AG04450 (cell line): ENCODE measurements at regions of chr3 and their contacts with region 1.

Region 1: DNA sequence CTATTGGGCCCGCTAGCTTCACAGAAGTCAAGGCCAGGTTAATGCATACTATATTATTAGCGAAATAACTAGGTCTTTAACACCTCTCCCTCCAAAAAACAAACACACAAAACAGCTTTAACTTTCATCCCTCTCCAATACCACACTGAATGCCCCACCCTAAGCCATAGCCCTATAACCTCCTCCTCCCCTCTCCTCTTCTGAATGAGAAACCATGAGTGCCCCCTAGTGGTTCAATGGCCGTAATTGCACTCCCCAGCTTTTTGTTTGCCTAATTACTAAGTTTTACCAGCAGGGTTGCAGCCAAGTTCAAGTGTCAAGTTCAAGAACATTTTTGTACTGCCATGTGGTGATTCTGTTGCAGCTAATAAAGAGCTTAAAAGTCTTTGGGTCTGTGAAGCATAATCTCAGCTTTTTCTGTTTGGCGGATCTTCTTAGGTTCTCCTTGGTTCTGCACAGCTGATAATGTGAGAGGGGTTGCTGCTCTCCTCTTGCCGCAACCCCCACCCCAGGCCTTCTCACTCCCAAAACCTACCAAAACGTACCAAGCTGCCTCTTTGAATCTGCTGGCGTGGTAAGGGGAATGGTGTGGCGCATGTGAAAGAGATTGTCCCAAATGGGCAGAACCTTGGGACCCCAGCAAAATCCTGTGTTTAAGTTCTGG is 57.9 kb downstream of the RPL22L1 start:
- DNase-seq: peak; percentile 61
- H3K4me3 ChIP-seq: no peak overlapping the region
- H3K27ac ChIP-seq: no peak overlapping the region
- H3K27me3 ChIP-seq: no peaks in the 10 kb centered on the region
- CTCF ChIP-seq: peak; percentile 92

Region 2: DNA sequence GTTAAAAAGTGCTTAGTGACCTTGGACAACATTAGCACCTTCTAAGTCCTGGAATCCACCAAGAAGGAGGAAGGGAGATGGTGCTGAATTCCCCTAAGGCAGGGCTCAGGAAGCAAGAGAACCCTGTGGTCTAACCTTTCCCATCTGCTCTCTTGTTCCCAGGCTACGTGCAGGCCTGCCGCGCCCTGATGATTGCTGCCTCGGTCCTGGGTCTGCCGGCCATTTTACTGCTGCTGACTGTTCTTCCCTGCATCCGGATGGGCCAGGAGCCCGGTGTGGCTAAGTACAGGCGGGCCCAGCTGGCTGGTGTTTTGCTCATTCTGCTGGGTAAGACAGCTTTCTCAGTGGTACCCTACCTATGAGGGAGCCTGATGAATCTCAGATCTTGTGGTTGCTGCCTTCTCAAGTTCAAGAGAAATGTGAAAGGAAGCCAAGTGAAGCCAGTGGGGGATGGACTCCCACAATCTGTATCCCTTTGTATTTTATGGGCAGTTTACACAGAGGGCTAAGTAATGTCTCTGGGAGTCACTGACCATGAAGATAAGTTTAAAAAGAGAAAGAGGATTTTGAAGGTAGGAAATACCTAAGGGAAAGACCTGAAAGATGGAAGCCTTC is 389.0 kb before region 1 on chr3:
- CTCF ChIA-PET with region 1: interaction called, 366 read pairs
- POLR2A ChIA-PET with region 1: interaction called, 3 read pairs
- DNase-seq: no peak
- H3K4me3 ChIP-seq: peak overlapping the region; percentile 94
- H3K27ac ChIP-seq: no peak overlapping the region
- H3K27me3 ChIP-seq: no peaks in the 10 kb centered on the region
- CTCF ChIP-seq: no peak

Region 3: GRCh38 chr3:170517242-170517945 is 294.7 kb before region 1 on chr3:
- CTCF ChIA-PET with region 1: interaction called, 10 read pairs
- POLR2A ChIA-PET with region 1: no interaction called
- DNase-seq: no peak
- H3K4me3 ChIP-seq: no peak overlapping the region
- H3K27ac ChIP-seq: no peak overlapping the region
- H3K27me3 ChIP-seq: no peaks in the 10 kb centered on the region
- CTCF ChIP-seq: no peak

Region 4: GRCh38 chr3:170689893-170690660 is 122.0 kb before region 1 on chr3:
- CTCF ChIA-PET with region 1: interaction called, 10 read pairs
- POLR2A ChIA-PET with region 1: no interaction called
- DNase-seq: no peak
- H3K4me3 ChIP-seq: no peak overlapping the region
- H3K27ac ChIP-seq: peak overlapping the region; percentile 3
- H3K27me3 ChIP-seq: no peaks in the 10 kb centered on the region
- CTCF ChIP-seq: peak; percentile 71

Region 5: DNA sequence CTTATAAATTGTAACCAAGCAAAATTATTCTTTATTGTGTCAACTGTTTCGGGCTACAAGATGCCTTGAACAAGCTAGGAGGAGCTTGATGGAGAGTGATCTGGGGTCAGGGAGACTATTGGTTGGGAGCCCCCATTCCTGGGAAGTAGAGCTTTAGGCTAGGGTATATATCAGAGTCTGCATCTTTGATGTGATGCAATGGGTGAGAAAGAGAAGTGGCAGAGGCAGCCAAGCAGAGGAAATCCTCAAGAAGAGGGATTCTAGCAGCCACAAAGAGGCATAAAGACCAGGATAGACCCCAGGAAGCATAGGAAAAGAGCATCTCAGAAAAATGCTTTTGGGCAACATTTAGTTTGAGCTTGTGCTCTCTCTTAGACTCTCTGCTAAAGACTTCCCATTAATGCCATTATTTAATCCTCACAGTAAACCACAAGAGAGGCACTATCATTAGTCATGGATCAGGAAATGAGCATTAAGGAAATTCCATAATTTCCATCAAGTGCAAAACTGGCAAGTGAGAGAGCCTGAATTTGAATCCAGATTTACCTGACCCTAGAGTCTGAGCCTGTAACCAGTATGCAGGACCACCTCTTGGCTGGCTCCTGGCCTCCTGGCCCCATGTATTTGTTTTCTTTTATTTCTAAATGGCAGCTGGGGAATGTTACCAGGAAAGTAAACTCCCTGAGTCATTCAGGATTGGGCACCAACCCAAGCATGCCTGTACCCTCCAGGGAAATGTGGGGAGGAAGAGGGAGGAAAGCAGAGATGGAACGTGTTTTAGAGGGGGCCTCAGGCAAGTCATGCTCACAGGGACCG is 60.8 kb before region 1 on chr3:
- CTCF ChIA-PET with region 1: interaction called, 16 read pairs
- POLR2A ChIA-PET with region 1: interaction called, 8 read pairs
- DNase-seq: peak; percentile 63
- H3K4me3 ChIP-seq: no peak overlapping the region
- H3K27ac ChIP-seq: peak overlapping the region; percentile 91
- H3K27me3 ChIP-seq: no peaks in the 10 kb centered on the region
- CTCF ChIP-seq: no peak

Region 6: DNA sequence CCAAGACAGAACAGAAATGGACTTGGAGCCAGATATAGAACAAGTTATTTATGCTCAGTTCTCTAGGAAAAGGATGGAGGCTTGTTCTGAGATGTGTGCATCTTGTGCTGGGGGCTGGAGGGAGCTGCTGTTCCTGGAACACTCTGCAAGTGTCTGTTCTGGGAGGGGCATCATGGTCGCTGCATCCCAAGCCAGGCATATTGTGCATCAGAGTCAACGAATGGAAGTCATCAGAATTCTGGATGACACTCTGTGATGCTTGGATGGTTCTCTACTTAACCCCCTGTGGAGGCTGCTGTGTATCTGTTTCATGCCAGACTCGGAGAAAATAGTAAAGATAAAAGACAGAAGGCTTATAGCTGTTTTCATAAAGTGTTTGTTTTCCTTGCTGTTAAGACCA is 23.3 kb after region 1 on chr3:
- CTCF ChIA-PET with region 1: interaction called, 60 read pairs
- POLR2A ChIA-PET with region 1: no interaction called
- DNase-seq: no peak
- H3K4me3 ChIP-seq: no peak overlapping the region
- H3K27ac ChIP-seq: no peak overlapping the region
- H3K27me3 ChIP-seq: no peaks in the 10 kb centered on the region
- CTCF ChIP-seq: no peak

Region 7: GRCh38 chr3:170914690-170915089 is 102.6 kb after region 1 on chr3:
- CTCF ChIA-PET with region 1: no interaction called
- POLR2A ChIA-PET with region 1: no interaction called
- DNase-seq: no peak
- H3K4me3 ChIP-seq: no peak overlapping the region
- H3K27ac ChIP-seq: no peak overlapping the region
- H3K27me3 ChIP-seq: no peaks in the 10 kb centered on the region
- CTCF ChIP-seq: no peak